ENCODE measurements at regions of chr5 and their contacts with region 1.

Region 1: DNA sequence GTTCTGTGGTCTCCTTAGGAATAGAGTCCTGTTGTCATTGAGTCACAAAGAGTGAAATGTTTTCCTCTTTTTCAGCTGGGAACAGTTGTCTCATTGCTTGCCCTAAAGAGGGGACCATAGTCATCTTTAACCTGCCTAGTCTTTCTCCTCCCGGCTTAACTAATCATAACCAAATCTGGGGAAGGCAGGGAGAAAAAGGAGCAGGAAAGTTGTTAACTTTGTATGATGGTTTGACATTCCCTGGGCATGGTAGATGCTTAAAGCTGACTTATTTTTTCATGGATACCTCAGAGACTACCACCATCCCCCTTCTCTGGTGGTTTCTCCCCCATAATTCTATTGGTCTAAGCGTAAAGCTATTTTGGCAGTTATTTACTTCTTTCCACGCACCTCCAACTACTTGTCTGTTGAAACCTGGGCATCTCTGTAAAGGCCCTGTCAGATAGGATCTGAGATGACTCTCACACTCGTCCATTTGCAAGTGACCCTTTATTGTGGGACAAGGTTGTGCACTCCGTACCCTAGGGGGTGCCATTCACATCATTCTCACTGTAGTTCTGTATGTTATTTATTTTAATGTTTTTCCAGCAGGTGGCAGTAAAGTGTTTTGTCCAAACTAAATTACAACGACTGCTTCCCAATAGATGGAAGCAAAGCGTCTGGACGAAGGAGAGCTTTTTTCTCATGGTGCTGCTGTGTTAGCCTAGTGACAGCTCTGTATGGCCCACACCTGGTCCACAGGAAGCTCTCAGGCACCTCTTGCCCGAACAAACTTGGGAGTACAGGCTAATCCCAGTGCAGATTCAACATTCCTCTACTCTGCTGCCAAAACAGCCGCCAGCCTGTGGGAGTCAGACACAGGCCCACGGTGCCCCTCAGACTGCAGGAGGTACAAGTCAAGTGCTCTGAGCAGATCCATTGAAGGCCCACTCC is 3.0 kb upstream of the FAM13B start:
- DNase-seq: peak; percentile 81
- ATAC-seq: peak; percentile 58
- H3K4me3 Mint-ChIP-seq: no peak overlapping the region
- H3K27ac Mint-ChIP-seq: no peak overlapping the region
- H3K4me1 Mint-ChIP-seq: peaks cover 27% of the 10 kb centered on the region
- H3K27me3 Mint-ChIP-seq: no peaks in the 10 kb centered on the region

Region 2: DNA sequence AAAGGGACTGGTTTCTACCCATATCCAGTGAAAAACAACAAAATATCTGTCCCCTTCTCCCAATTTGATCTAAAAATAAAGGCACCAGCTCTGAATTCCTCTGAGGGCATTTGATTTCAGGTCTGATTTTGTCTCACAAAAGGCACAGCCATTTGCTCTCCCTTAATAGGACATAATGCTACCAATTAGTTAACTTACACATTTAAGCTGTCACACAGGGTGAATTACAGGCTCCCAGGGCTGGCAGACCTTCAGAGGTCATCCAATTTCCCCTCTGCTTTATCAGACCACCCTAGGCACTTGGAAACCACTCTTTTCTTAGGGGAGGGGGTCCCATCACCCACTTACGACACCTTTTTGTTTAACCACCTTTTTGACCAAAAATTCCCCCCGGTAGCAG is 856.7 kb before region 1 on chr5:
- CTCF ChIA-PET with region 1: no interaction called
- POLR2A ChIA-PET with region 1: no interaction called
- DNase-seq: no peak
- ATAC-seq: no peak
- H3K4me3 Mint-ChIP-seq: no peak overlapping the region
- H3K27ac Mint-ChIP-seq: no peak overlapping the region
- H3K4me1 Mint-ChIP-seq: no peaks in the 10 kb centered on the region
- H3K27me3 Mint-ChIP-seq: no peaks in the 10 kb centered on the region

Region 3: DNA sequence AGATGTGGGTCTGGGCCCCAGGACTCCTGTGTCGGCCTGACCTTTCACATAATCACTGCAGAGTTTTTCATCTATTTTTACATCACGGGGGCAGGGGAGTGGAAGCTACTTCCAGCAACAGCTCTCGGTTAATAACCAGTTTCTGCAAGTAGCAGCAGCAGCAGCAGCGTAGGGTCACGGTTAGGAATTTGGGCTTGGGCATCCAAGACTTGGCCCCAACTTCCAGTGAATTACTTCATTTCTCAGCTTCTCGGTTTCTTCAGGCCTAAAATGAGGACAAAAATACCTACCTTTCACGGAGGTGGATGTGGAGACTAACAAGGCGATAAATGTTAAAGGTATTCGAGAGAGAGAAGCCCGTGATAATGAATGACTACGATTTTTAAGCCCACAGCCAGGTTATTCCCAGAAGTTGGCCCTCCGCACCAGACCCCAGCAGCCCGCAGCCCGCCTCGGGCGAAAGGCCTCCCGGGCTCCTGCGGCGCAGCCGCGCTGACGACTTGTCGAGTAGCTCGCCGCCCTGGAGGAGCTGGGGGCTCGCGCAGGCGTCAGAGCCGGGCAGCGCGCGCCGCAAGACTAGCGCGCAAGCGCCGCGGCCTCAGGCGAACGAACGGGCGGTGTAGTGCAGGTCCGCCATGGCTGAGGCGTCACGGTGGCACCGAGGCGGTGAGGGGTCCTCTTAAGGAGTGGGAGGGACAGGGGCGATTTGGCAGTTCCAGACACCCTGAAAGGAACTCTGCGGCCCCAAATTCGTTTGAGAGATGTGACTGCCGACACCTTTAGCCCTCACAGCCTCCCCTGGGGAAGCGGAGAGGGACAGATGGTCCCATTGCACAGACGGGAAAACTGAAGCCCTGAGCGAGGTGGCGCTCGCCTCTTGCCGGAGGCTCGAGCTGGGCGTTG is 146.8 kb before region 1 on chr5 and contains the start of gene PKD2L2:
- CTCF ChIA-PET with region 1: interaction called, 13 read pairs
- POLR2A ChIA-PET with region 1: no interaction called
- DNase-seq: peak; percentile 86
- ATAC-seq: peak; percentile 100
- H3K4me3 Mint-ChIP-seq: peak within 1 kb of the TSS; percentile 73
- H3K27ac Mint-ChIP-seq: peak within 1 kb of the TSS; percentile 85
- H3K4me1 Mint-ChIP-seq: peaks cover 21% of the 10 kb centered on the region
- H3K27me3 Mint-ChIP-seq: peaks cover 5% of the 10 kb centered on the region
- total RNA-seq, gene PKD2L2: not detected

Region 4: GRCh38 chr5:138018844-138019243 is 17.0 kb before region 1 on chr5:
- CTCF ChIA-PET with region 1: interaction called, 15 read pairs
- POLR2A ChIA-PET with region 1: no interaction called
- DNase-seq: no peak
- ATAC-seq: no peak
- H3K4me3 Mint-ChIP-seq: no peak overlapping the region
- H3K27ac Mint-ChIP-seq: no peak overlapping the region
- H3K4me1 Mint-ChIP-seq: peaks cover 14% of the 10 kb centered on the region
- H3K27me3 Mint-ChIP-seq: no peaks in the 10 kb centered on the region

Region 5: GRCh38 chr5:138051441-138052296 is 15.8 kb after region 1 on chr5:
- CTCF ChIA-PET with region 1: interaction called, 20 read pairs
- POLR2A ChIA-PET with region 1: no interaction called
- DNase-seq: no peak
- ATAC-seq: no peak
- H3K4me3 Mint-ChIP-seq: no peak overlapping the region
- H3K27ac Mint-ChIP-seq: no peak overlapping the region
- H3K4me1 Mint-ChIP-seq: no peaks in the 10 kb centered on the region
- H3K27me3 Mint-ChIP-seq: peaks cover 4% of the 10 kb centered on the region

Region 6: DNA sequence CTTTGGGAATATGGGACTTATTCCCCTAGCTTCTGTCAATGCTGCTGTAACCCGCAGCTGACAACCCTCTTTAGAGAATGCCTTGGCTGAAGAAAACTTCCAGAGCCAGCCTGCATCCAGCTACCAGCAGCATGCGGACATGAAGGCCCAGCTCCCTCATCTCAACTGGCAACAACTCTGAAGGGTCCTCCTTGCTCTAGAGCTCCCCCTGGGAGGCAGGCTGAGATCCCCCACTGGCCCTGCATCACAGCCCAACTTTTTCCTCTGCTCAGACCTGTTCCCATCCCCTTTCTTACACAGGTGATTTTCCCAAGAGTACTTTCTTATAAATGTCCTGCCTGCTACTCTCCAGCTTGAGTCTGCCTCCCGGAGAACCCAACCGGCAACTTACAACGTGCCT is 29.2 kb after region 1 on chr5:
- CTCF ChIA-PET with region 1: interaction called, 235 read pairs
- POLR2A ChIA-PET with region 1: interaction called, 4 read pairs
- DNase-seq: no peak
- ATAC-seq: no peak
- H3K4me3 Mint-ChIP-seq: no peak overlapping the region
- H3K27ac Mint-ChIP-seq: no peak overlapping the region
- H3K4me1 Mint-ChIP-seq: peaks cover 4% of the 10 kb centered on the region
- H3K27me3 Mint-ChIP-seq: no peaks in the 10 kb centered on the region

Region 7: DNA sequence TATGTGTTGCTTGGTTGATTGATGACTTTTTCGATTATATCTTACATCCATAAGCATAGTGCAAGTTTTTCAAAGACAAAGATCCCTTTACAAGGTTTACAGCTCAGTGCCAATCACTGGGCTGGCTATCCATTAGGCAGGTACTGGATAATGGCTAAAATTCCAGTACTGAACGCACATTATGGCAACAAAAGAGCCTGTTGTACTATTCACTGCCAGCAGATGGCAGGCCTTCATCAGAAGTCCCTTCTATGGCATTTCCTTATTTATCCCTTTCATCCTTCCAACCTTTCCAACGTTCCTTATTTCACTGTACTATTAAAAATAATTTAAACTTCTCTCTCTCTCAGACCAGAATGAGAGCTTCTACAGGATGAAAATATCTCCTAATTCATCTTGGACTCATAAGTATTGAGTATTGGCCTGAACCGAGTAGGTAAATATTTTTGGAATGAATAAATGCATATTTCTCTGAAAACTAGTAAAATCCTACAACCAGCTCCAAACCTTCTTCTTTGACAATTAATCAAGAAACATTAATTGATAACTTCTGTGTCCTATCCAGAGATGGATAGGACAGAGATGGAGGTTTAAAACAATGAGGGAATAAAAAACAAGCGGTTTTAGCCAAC is 41.3 kb after region 1 on chr5:
- CTCF ChIA-PET with region 1: interaction called, 19 read pairs
- POLR2A ChIA-PET with region 1: no interaction called
- DNase-seq: peak; percentile 60
- ATAC-seq: no peak
- H3K4me3 Mint-ChIP-seq: no peak overlapping the region
- H3K27ac Mint-ChIP-seq: no peak overlapping the region
- H3K4me1 Mint-ChIP-seq: peaks cover 12% of the 10 kb centered on the region
- H3K27me3 Mint-ChIP-seq: no peaks in the 10 kb centered on the region

Region 8: DNA sequence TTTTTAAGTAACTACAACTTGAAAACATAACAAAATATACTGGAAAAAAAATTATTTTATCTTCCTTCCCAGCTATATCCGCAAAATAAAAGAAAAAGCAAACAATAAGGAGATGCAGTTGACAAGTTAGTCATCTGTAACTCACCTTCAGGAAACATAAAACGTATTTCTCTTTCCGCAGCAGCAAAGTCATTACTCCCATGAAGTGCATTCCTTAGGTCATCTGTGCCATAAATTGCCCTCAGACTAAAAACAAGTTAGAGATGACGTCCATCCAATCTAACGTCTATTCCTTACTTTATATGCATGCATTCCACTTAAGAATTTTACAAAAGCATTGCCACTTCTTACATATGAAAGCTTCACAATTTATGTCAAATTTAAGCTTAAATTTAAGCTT is 92.5 kb after region 1 on chr5:
- CTCF ChIA-PET with region 1: interaction called, 20 read pairs
- POLR2A ChIA-PET with region 1: no interaction called
- DNase-seq: no peak
- ATAC-seq: no peak
- H3K4me3 Mint-ChIP-seq: no peak overlapping the region
- H3K27ac Mint-ChIP-seq: no peak overlapping the region
- H3K4me1 Mint-ChIP-seq: no peaks in the 10 kb centered on the region
- H3K27me3 Mint-ChIP-seq: peaks cover 14% of the 10 kb centered on the region

Region 9: GRCh38 chr5:138726848-138727247 is 691.0 kb after region 1 on chr5:
- CTCF ChIA-PET with region 1: no interaction called
- POLR2A ChIA-PET with region 1: no interaction called
- DNase-seq: peak; percentile 58
- ATAC-seq: peak; percentile 68
- H3K4me3 Mint-ChIP-seq: peak overlapping the region; percentile 15
- H3K27ac Mint-ChIP-seq: peak overlapping the region; percentile 19
- H3K4me1 Mint-ChIP-seq: peaks cover 28% of the 10 kb centered on the region
- H3K27me3 Mint-ChIP-seq: peaks cover 55% of the 10 kb centered on the region

Measured in activated CD8-positive, alpha-beta T cell treated with anti-CD3 and anti-CD28 coated beads, Interleukin-2, amount 10 ng/mL, durations not matched to agents 7 days and 5 days (primary cell).